ENCODE measurements at regions of chr1 and their contacts with region 1.

Region 1: GRCh38 chr1:236870721-236871120 is 75.6 kb downstream of the MTR start:
- DNase-seq: no peak
- ATAC-seq: peak; percentile 12

Region 2: DNA sequence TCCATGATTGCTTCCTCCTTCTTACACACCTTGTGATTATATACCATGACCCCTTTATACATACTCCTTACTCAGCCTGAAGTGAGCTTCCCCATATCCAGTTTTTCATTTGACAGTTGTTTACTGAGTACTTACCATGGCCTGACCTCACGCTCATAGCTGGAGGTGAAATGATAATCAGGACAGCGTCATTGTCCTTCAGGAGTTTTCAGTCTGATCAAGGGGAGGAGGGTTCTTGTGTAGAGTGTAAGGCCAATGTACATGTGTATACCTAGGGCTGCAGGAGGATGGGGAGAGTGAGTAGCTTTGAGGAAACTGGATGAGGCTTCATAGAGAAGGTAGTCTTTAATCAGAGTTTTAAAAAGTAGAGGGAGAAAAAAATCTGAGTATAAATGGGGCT is 497.0 kb after region 1 on chr1:
- intact Hi-C with region 1: loop called (anchors 5 kb)
- DNase-seq: no peak
- ATAC-seq: peak; percentile 6

Measured in left ventricle myocardium superior (tissue), 1 donor.